Activated T-helper 1 cell treated with anti-CD3 and anti-CD28 coated beads, Interleukin-12 subunit alpha, Interleukin-12 subunit beta, Interleukin-2, Interleukin-4 antibody, amounts not matched to agents 30 ng/mL and 10 ng/mL and 1 ng/mL, durations not matched to agents 14 hours and 24 hours and 36 hours (primary cell): ENCODE measurements at regions of chr1 and their contacts with region 1.

Region 1: DNA sequence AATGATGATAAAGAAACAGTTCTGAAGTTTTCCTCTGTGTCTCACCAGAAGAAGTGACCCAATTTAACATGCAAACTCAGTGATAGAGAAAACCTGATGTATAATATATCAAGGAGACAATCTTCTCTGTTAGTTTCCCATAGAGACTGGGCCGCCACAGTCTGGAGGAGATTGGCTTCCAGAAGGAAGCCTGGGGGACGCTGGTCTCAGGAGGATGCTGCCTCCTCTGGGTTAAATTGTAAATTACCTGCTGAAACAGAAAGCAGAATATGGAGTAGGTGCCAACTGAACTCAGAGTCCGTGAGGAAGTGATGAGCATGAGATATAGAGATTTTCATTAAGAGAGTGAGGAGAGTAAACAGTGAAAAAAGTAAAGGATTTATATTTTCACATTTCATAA is 15.8 kb downstream of the OR14I1 start:
- DNase-seq: no peak
- H3K4me3 Mint-ChIP-seq: no peak overlapping the region
- H3K27ac Mint-ChIP-seq: no peak overlapping the region
- H3K4me1 Mint-ChIP-seq: peaks cover 5% of the 10 kb centered on the region
- H3K27me3 Mint-ChIP-seq: no peaks in the 10 kb centered on the region

Region 2: GRCh38 chr1:248243204-248243603 is 443.6 kb before region 1 on chr1:
- intact Hi-C with region 1: loop called (anchors 10 kb)
- DNase-seq: no peak
- H3K4me3 Mint-ChIP-seq: no peak overlapping the region
- H3K27ac Mint-ChIP-seq: no peak overlapping the region
- H3K4me1 Mint-ChIP-seq: peaks cover 7% of the 10 kb centered on the region
- H3K27me3 Mint-ChIP-seq: no peaks in the 10 kb centered on the region

Region 3: GRCh38 chr1:248404024-248404423 is 282.8 kb before region 1 on chr1:
- intact Hi-C with region 1: loop called (anchors 1 kb)
- DNase-seq: no peak
- H3K4me3 Mint-ChIP-seq: no peak overlapping the region
- H3K27ac Mint-ChIP-seq: no peak overlapping the region
- H3K4me1 Mint-ChIP-seq: no peaks in the 10 kb centered on the region
- H3K27me3 Mint-ChIP-seq: peaks cover 2% of the 10 kb centered on the region

Region 4: DNA sequence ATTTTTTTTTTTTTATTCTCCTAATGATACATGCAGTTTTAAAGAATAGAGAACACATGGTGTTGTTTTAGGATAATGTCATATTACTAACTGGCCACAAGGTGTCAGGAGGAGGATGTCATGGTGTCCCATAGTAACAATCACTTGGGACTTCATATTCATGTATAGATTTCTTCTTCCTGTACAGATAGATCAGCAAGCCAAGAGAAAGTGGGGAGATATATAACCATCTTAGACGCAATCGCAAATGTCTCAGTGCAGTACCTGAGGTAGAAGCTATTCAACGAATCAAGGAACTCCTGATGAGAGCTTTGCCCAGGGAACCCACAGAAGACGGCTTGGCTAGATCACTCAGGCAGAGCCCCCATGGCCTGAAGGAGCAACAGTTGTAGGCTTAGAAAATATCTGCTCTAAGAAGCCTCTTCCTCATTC is 64.2 kb before region 1 on chr1:
- intact Hi-C with region 1: loop called (anchors 1 kb)
- DNase-seq: no peak
- H3K4me3 Mint-ChIP-seq: no peak overlapping the region
- H3K27ac Mint-ChIP-seq: no peak overlapping the region
- H3K4me1 Mint-ChIP-seq: peaks cover 9% of the 10 kb centered on the region
- H3K27me3 Mint-ChIP-seq: no peaks in the 10 kb centered on the region